Esophagus muscularis mucosa (tissue), 4 donors: ENCODE measurements at regions of chr6 and their contacts with region 1.

Region 1: DNA sequence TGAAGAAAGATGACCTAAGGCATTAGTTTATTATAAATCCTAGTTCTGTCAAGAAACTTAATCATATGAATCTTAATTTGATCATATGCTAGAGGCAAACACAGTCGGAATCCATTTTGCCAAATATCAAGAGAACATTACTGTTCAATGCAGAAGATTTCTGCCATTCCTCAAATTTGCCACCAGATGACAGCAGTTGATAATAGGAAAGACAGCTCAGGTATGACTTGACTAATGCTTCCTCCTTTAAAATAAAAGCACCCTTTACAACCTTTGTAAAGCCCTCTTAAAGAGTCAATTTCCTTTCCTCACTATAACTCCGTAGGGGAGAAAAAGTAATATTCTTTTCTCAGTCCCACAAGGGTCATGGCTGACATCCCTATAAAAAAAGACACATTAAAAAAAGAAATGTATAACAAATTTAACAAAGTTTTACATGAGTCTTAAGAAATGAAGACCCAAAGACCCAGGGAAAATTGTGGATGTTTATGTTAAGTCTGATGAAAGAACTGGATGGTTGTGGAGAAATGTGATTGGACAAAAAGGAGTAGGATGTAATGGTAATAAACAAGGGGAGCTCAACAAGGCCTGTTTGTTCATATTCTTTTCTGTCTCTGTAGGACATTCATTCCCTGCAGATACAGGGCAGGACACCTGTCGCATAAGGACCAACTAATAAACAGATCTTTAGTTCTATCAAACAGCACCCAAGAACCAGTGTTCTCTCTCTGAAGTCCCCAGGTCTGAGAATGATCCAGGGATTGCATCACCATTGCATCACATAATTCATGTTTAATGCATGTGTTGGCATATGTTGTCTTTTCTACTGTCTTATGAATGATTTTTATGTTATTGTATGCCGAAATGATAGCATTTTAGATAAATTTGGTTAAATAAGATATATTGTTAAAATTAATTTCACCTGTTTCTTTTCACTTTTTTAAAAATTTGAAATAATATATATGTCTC is 23.0 kb upstream of the IL17A start:
- DNase-seq: no peak
- H3K4me3 ChIP-seq: no peak overlapping the region
- H3K27ac ChIP-seq: no peak overlapping the region
- H3K4me1 ChIP-seq: no peaks in the 10 kb centered on the region
- H3K27me3 ChIP-seq: peaks cover 0 to 4% (median 0%) of the 10 kb centered on the region in 4 donors
- CTCF ChIP-seq: peak; percentile 18 to 42 (median 30)
- EP300 ChIP-seq: no peak
- POLR2A ChIP-seq: no peak

Region 2: GRCh38 chr6:52210227-52210626 is 47.0 kb after region 1 on chr6:
- intact Hi-C with region 1: no loop called
- DNase-seq: no peak
- H3K4me3 ChIP-seq: no peak overlapping the region
- H3K27ac ChIP-seq: no peak overlapping the region
- H3K4me1 ChIP-seq: peaks cover 0 to 4% (median 0%) of the 10 kb centered on the region in 4 donors
- H3K27me3 ChIP-seq: no peaks in the 10 kb centered on the region
- CTCF ChIP-seq: no peak
- EP300 ChIP-seq: no peak
- POLR2A ChIP-seq: no peak

Region 3: DNA sequence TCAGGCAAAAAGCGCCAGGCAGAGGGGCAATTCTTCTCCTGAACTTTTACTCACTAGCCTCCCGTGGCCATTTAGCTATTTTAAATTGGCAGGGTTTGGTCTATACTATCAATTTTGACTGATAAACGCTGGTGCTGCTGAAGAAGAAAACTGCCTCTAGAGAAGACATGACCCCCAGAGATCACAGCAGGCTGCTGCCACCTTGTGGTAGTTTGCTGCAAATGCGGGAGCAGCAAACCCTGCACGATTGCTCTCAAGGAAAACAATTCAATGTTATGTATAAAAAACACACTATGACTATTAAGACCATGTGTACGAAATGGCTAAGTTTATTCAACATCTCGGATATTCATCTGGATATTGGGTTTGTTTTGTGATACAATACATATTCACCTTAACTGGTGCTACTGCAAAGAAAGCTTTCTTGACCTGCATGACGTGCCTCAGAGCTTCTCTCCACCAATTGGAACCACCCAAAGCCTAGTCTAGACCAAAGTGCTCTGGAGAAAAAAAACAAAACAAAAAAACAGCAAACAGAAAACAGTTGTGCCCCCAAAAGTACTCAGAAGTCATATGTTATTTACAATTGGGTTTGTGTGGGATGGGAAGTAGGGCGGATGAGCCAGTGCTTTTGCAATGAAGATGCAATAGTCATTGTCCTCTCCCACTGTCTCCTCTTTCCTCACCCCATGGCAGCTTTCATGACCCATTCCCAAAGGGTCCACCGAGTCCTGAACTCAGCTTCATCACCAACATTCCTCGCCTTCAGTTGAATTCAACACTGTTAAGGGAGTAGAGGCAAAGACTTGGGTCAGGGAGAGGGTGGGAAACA is 100.7 kb after region 1 on chr6:
- intact Hi-C with region 1: loop called (anchors 5 kb)
- DNase-seq: no peak
- H3K4me3 ChIP-seq: no peak overlapping the region
- H3K27ac ChIP-seq: no peak overlapping the region
- H3K4me1 ChIP-seq: peaks cover 0 to 10% (median 7%) of the 10 kb centered on the region in 4 donors
- H3K27me3 ChIP-seq: no peaks in the 10 kb centered on the region
- CTCF ChIP-seq: peak; percentile 85 to 93 (median 89)
- EP300 ChIP-seq: no peak
- POLR2A ChIP-seq: no peak